ENCODE measurements at regions of chr15 and their contacts with region 1.

Region 1: GRCh38 chr15:57866149-57866736 is 159.7 kb downstream of the POLR2M start:
- ATAC-seq: peak in 2 of 8 experiments; percentile 56 to 58
- H3K4me3 ChIP-seq: no peak overlapping the region
- H3K27ac ChIP-seq: no peak overlapping the region
- H3K4me1 ChIP-seq: peaks cover 0 to 10% of the 10 kb centered on the region in 2 donors

Region 2: DNA sequence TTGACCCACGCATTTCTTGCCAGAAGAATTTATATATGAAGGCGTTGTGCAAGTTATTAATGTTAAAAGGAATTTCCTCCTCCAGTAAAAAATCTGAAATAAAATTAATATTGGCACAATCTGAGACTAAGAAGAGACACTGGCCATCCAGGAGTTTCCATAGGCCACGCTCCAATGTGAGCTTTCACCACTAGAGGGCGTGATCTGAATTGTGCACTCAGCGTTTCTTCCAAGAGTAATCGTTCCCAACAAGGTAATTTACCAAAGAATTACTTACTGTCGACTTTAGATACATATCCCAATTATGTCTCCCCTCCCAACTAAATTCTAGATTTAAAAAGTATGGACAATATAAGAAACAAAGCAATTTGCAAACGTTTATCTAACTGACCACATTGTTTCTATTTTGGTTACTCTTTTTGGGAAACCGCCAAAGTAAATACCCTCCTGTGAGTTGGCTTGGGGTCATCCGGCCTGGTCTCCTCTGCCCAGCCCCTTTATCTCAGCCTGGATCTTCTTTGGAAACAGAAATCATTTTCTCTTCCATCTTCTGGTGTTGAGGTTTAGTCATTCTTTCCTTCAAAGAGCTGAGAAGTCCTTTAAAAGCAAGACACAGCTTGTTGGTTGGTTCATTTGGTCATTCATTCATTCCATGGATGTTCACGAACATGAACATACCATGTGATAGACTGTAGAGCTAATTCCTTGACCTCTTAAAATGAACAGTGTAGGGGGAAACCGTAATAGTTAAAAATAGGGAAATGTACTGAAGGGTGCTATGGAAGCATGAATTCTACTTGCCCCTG is 133.5 kb before region 1 on chr15:
- in situ Hi-C with region 1: loop called in 1 of 9 experiments (anchors 25 kb)
- ATAC-seq: peak in 4 of 8 experiments; percentile 37 to 76 (median 68)
- H3K4me3 ChIP-seq: no peak overlapping the region
- H3K27ac ChIP-seq: no peak overlapping the region
- H3K4me1 ChIP-seq: peaks cover 7 to 8% of the 10 kb centered on the region in 2 donors

Region 3: DNA sequence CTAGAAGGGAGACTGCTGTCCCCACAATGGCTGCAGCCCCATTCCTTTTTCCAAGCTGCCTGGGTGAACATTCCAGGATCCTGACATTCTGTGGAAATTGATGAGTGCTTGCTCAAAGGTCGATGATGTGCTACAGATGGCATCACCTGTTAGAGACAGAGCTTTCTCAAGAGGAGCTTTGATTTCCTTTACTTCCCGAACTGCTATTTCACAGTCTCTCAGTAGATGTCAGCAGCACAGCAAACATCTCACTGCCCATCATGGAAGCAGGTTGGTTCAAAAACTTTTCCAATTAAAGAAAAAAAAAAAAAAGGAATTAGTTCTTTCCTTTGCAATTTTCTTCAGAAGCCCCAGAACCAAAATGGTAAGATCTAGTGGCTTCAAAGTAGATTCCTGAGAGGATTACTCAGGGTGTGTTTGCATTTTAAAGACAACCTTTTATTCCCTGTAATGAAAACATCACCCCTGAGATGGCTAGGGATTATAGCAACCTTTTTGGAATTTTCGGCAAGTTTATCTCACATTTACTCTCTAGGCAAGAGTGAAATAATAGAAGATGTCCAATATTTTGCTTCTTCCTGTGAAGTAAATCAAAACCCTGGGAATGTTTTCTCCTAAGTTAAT is 115.0 kb before region 1 on chr15:
- in situ Hi-C with region 1: loop called in 3 of 9 experiments (anchors 5 to 25 kb)
- ATAC-seq: peak in 6 of 8 experiments; percentile 32 to 62 (median 55)
- H3K4me3 ChIP-seq: no peak overlapping the region
- H3K27ac ChIP-seq: no peak overlapping the region
- H3K4me1 ChIP-seq: peaks cover 12 to 17% of the 10 kb centered on the region in 2 donors

Region 4: GRCh38 chr15:58070801-58071418 is 204.7 kb after region 1 on chr15:
- in situ Hi-C with region 1: loop called in 2 of 9 experiments (anchors 5 to 25 kb)
- ATAC-seq: peak in 3 of 8 experiments; percentile 29 to 41 (median 33)
- H3K4me3 ChIP-seq: no peak overlapping the region
- H3K27ac ChIP-seq: no peak overlapping the region
- H3K4me1 ChIP-seq: no peaks in the 10 kb centered on the region

Region 5: GRCh38 chr15:58182460-58183163 is 316.4 kb after region 1 on chr15:
- in situ Hi-C with region 1: loop called in 1 of 9 experiments (anchors 25 kb)
- ATAC-seq: peak; percentile 80 to 99 (median 92)
- H3K4me3 ChIP-seq: no peak overlapping the region
- H3K27ac ChIP-seq: no peak overlapping the region
- H3K4me1 ChIP-seq: peaks cover 0 to 5% of the 10 kb centered on the region in 2 donors